ENCODE measurements at regions of chr14 and their contacts with region 1.

Region 1: GRCh38 chr14:77067632-77068514 is 30.2 kb upstream of the CIPC start:
- DNase-seq: peak; percentile 79 to 87
- ATAC-seq: peak; percentile 87 to 92
- H3K4me3 ChIP-seq: no peak overlapping the region
- H3K27ac ChIP-seq: peak overlapping the region; percentile 73 to 87
- H3K4me1 ChIP-seq: peaks cover 35% of the 10 kb centered on the region
- CTCF ChIP-seq: peak; percentile 96
- EP300 ChIP-seq: 0 out of 5 replicates have a peak, but pooled peaks of 1 of the 2 experiments have one; percentile 26
- POLR2A ChIP-seq: no peak
- RAD21 ChIP-seq: peak; percentile 100

Region 2: DNA sequence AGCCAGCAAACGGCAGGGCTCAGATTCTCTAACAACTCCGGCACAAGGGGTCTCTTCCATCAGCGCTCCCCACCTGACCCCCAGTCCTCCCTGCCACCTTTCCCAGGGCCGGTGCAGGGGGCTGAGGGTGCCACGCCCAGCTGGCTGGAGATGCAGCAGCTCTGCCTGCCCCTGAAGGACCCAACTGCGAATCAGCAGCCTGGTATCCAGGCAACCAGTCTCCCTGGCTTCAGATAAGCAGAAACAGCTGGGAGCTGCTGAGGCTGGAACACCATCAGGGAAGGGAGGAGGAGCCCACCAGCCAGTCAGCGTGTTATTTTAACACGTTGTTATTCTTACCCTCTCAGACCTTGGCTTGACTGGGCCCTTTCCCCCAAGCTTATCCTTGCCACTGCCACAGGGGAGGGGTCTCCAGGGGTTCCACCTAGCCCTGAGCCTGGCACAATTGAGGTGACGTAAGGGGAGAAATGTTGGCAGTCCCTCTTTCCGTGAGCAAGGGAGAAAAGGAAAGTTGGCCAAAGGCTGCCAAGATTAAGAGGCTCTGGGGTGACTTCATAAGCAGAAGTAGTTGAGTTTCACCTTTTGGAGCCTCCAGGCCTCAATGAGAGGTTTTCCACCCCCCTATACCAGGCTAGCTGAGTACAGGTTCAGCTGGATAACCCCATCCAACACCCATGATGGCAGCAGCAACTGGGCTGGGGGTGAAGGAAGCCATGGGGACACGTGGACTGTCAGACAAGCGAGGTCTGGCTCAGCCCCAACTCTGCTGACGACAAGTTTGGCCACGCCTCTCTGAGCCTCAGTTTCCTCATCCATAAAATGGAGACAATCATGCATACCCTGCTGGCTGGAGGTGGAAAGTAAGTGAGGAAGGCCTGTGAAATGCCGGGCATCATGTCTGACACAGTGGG is 130.4 kb before region 1 on chr14:
- CTCF ChIA-PET with region 1: interaction called, 32 read pairs
- POLR2A ChIA-PET with region 1: no interaction called
- DNase-seq: no peak
- ATAC-seq: peak; percentile 51 to 70; a peak in 4 of 6 replicates
- H3K4me3 ChIP-seq: no peak overlapping the region
- H3K27ac ChIP-seq: peak overlapping the region; percentile 42 to 65; a peak in 5 of 6 replicates
- H3K4me1 ChIP-seq: peaks cover 32% of the 10 kb centered on the region
- CTCF ChIP-seq: no peak
- EP300 ChIP-seq: no peak
- POLR2A ChIP-seq: no peak
- RAD21 ChIP-seq: no peak

Region 3: GRCh38 chr14:76956316-76957090 is 111.4 kb before region 1 on chr14:
- CTCF ChIA-PET with region 1: interaction called, 132 read pairs
- POLR2A ChIA-PET with region 1: no interaction called
- DNase-seq: peak; percentile 66 to 97
- ATAC-seq: peak; percentile 65 to 66
- H3K4me3 ChIP-seq: peak overlapping the region; percentile 30
- H3K27ac ChIP-seq: peak overlapping the region; percentile 96 to 100
- H3K4me1 ChIP-seq: peaks cover 91% of the 10 kb centered on the region
- CTCF ChIP-seq: no peak
- EP300 ChIP-seq: peak; percentile 85 to 95; a peak in 4 of 5 replicates
- POLR2A ChIP-seq: peak; percentile 29
- RAD21 ChIP-seq: peak; percentile 34 to 73; a peak in 4 of 5 replicates

Region 4: GRCh38 chr14:76985540-76986230 is 82.2 kb before region 1 on chr14:
- CTCF ChIA-PET with region 1: interaction called, 16 read pairs
- POLR2A ChIA-PET with region 1: no interaction called
- DNase-seq: peak; percentile 28 to 46
- ATAC-seq: peak; percentile 68 to 79
- H3K4me3 ChIP-seq: no peak overlapping the region
- H3K27ac ChIP-seq: peak overlapping the region; percentile 43 to 78; a peak in 5 of 6 replicates
- H3K4me1 ChIP-seq: peaks cover 19% of the 10 kb centered on the region
- CTCF ChIP-seq: no peak
- EP300 ChIP-seq: no peak
- POLR2A ChIP-seq: no peak
- RAD21 ChIP-seq: no peak

Region 5: DNA sequence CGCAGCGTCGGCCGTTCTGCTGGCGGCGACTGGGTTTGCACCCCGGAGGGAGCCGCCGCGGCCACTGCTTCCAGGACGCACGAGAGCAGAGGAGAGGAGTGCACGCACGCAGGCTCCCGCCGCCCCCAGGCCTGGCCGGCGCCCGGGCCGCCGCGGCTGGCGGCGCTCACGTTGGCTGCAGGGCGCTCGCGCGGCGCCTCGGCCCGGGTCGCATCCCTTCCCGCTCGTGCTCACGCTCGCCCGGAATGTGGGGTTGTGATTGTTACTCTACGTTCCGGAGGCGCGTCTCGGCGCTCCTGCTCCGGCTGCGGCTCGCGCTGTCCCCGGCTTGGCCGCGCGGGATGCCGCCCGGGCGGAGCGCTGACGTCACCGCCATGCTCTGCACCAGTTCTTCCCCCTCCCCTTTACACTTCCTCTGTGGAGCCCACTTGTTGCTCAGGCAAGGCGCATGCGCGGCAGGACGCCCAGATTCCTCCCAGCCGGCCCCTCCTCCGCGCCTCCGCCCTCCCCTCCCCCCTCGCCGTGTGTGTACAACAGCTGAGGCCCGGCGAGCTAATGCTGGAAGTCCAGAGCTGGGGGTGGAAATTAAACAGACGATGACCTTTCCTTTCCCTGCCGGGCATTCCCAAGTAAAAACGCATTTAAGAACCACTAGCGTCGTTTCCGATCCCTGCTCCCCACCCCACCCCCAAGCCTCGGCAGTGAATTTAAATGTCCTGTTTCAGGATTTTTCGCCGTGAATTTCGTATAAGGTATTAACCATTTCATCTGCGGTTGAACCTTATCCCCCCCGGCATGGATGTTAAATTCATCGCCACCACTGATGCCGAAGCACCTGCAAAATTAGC is 39.3 kb before region 1 on chr14 and contains the start of gene IRF2BPL:
- CTCF ChIA-PET with region 1: interaction called, 481 read pairs
- POLR2A ChIA-PET with region 1: interaction called, 21 read pairs
- DNase-seq: peak; percentile 94 to 99
- ATAC-seq: peak; percentile 46 to 48
- H3K4me3 ChIP-seq: peak within 1 kb of the TSS; percentile 78
- H3K27ac ChIP-seq: peak within 1 kb of the TSS; percentile 95 to 99
- H3K4me1 ChIP-seq: peaks cover 49% of the 10 kb centered on the region
- CTCF ChIP-seq: no peak
- EP300 ChIP-seq: peak; percentile 83 to 94
- POLR2A ChIP-seq: peak; percentile 86
- RAD21 ChIP-seq: peak; percentile 31 to 61; a peak in 4 of 5 replicates
- polyA plus RNA-seq, gene IRF2BPL: 12.5 and 18.1 TPM in 2 replicates

Region 6: GRCh38 chr14:77053046-77053841 is 14.6 kb before region 1 on chr14:
- CTCF ChIA-PET with region 1: interaction called, 182 read pairs
- POLR2A ChIA-PET with region 1: no interaction called
- DNase-seq: peak in 1 of 2 experiments; percentile 65
- ATAC-seq: peak; percentile 28 to 88; a peak in 3 of 6 replicates
- H3K4me3 ChIP-seq: no peak overlapping the region
- H3K27ac ChIP-seq: peak overlapping the region; percentile 66 to 81
- H3K4me1 ChIP-seq: peaks cover 19% of the 10 kb centered on the region
- CTCF ChIP-seq: peak; percentile 67
- EP300 ChIP-seq: no peak
- POLR2A ChIP-seq: no peak
- RAD21 ChIP-seq: peak; percentile 83 to 86

Region 7: DNA sequence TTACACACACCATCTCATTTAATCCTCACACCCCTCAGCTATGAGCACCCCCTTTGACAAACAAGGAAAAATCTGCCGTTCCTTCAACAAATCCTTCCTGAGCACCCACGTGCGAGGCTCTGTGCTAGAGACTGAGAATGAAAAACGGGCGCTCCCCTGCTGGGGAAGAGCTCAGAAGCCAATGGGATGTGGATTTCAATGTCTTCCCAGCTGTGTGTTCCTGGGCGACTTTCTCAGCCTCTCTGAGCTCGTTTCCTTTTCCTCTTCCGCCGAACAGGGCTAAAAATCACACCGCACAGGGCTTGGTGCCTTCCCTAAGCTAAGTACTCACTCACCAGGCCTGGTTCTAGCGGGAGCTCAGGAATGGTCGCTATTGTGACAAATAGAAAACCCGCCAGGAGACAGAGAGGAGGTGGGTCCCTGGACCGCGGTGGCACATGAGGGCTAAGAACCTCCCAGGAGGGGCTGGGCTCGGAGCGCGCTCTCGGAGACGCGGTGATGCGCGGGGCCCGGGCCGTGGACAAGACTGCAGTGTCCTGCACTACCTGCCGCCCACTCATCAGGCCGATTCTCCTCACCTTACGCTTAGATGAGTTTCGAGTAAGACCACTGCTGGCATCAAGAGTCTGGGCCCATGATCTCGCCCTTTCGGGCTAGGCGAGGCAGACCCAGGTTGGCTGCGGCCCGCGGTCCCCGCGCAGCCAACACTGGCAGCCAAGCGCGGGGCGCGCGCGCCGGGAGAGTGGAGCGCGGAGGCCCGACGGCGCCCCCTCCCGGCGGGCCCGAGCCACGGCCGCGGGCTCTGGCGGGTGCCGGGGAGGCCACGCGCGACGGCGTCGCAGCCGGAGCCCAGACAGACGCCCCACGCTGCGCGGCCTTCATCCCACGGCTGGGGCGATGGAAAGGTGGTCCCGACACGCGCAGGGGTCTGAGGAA is 56.7 kb after region 1 on chr14:
- CTCF ChIA-PET with region 1: interaction called, 32 read pairs
- POLR2A ChIA-PET with region 1: no interaction called
- DNase-seq: peak in 1 of 2 experiments; percentile 48
- ATAC-seq: peak; percentile 76 to 90
- H3K4me3 ChIP-seq: peak overlapping the region; percentile 47
- H3K27ac ChIP-seq: peak overlapping the region; percentile 62 to 84
- H3K4me1 ChIP-seq: peaks cover 15% of the 10 kb centered on the region; the same call in 2 of the 3 replicates
- CTCF ChIP-seq: peak; percentile 92
- EP300 ChIP-seq: no peak
- POLR2A ChIP-seq: peak; percentile 60
- RAD21 ChIP-seq: peak in 1 of 2 experiments; percentile 51; a peak in 2 of 5 replicates

Measured in A549 (cell line).